Aorta (tissue), 5 donors: ENCODE measurements at regions of chr10 and their contacts with region 1.

Region 1: GRCh38 chr10:21399392-21400035 is 126.0 kb downstream of the SKIDA1 start:
- DNase-seq: no peak
- ATAC-seq: no peak
- H3K4me3 ChIP-seq: no peak overlapping the region
- H3K27ac ChIP-seq: no peak overlapping the region
- H3K4me1 ChIP-seq: no peaks in the 10 kb centered on the region
- H3K27me3 ChIP-seq: no peaks in the 10 kb centered on the region

Region 2: GRCh38 chr10:21336476-21337170 is 62.9 kb before region 1 on chr10:
- intact Hi-C with region 1: loop called in 1 of 2 experiments (anchors 10 kb)
- DNase-seq: peak in 1 of 2 donors; percentile 74
- ATAC-seq: peak; percentile 42
- H3K4me3 ChIP-seq: no peak overlapping the region
- H3K27ac ChIP-seq: no peak overlapping the region
- H3K4me1 ChIP-seq: peaks cover 2 to 3% of the 10 kb centered on the region in 2 donors
- H3K27me3 ChIP-seq: no peaks in the 10 kb centered on the region

Region 3: GRCh38 chr10:21464143-21464533 is 64.6 kb after region 1 on chr10:
- intact Hi-C with region 1: no loop called
- DNase-seq: no peak
- ATAC-seq: no peak
- H3K4me3 ChIP-seq: no peak overlapping the region
- H3K27ac ChIP-seq: no peak overlapping the region
- H3K4me1 ChIP-seq: no peaks in the 10 kb centered on the region
- H3K27me3 ChIP-seq: no peaks in the 10 kb centered on the region